ENCODE measurements at regions of chr1 and their contacts with region 1.

Region 1: GRCh38 chr1:28329395-28330153 is 734 bp downstream of the MED18 start:
- DNase-seq: peak; percentile 31
- H3K4me3 ChIP-seq: peak overlapping the region; percentile 56 to 84 (median 70)
- H3K27ac ChIP-seq: peak overlapping the region; percentile 85 to 97 (median 92)
- H3K4me1 ChIP-seq: peaks cover 7 to 46% (median 32%) of the 10 kb centered on the region in 4 donors
- H3K27me3 ChIP-seq: no peaks in the 10 kb centered on the region
- CTCF ChIP-seq: peak in 4 of 5 experiments; percentile 8 to 52 (median 27)
- EP300 ChIP-seq: no peak
- POLR2A ChIP-seq: no peak

Region 2: DNA sequence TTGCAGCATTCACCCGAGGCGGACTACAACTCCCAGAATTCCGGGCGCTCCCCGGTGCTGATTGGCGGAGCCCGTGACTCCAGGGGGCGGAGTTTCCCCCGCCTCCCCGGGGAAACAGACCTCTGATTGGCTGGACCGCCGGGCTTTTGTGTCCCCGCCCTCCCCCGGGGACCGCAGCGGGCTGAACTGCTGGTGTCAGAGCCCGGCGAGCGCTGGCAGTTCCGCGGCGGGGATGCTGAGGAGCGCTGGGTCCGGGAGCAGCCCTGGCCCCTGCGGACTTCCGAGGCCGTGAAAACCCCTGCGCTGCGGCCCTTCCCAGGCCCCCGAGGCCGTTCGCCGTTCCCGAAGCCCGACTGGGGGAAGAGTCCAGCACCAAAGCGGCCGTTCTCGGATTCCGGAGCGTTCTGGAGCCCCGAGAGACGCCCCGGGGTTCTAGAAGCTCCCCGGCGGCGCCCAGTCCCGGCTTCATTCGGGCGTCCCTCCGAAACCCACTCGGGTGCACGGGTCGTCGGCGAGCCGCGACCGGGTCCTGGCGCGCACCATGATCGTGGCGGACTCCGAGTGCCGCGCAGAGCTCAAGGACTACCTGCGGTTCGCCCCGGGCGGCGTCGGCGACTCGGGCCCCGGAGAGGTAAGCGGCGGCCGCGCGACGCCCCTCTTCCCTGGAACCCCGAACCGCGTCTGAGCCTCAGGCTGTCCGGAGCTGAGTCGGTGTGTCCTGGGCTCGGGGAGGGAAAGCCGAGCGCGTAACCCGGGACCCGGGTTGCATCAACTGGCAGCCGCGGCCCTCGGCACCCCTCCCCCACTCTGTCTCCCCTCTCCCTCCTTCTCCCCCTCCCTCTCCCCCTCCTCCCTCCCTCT is 70.0 kb before region 1 on chr1 and contains the start of gene SESN2:
- in situ Hi-C with region 1: loop called in 2 of 4 experiments (anchors 10 kb)
- intact Hi-C with region 1: loop called (anchors 10 kb)
- DNase-seq: peak; percentile 100
- H3K4me3 ChIP-seq: peak within 1 kb of the TSS; percentile 75 to 99 (median 88)
- H3K27ac ChIP-seq: peak within 1 kb of the TSS; percentile 90 to 97 (median 96)
- H3K4me1 ChIP-seq: peaks cover 14 to 48% (median 33%) of the 10 kb centered on the region in 4 donors
- H3K27me3 ChIP-seq: no peaks in the 10 kb centered on the region
- CTCF ChIP-seq: no peak
- EP300 ChIP-seq: no peak
- POLR2A ChIP-seq: peak; percentile 97
- total RNA-seq, gene SESN2: 25.1 to 44.5 (median 30.5) TPM